Activated CD4-positive, alpha-beta memory T cell treated with anti-CD3 and anti-CD28 coated beads for 36 hours (primary cell): ENCODE measurements at regions of chr12 and their contacts with region 1.

Region 1: GRCh38 chr12:46209914-46210872 is 58.6 kb downstream of the SLC38A1 start:
- DNase-seq: peak; percentile 82
- H3K4me3 Mint-ChIP-seq: peak overlapping the region; percentile 40
- H3K27ac Mint-ChIP-seq: peak overlapping the region; percentile 98
- H3K4me1 Mint-ChIP-seq: peaks cover 74% of the 10 kb centered on the region
- H3K27me3 Mint-ChIP-seq: no peaks in the 10 kb centered on the region

Region 2: DNA sequence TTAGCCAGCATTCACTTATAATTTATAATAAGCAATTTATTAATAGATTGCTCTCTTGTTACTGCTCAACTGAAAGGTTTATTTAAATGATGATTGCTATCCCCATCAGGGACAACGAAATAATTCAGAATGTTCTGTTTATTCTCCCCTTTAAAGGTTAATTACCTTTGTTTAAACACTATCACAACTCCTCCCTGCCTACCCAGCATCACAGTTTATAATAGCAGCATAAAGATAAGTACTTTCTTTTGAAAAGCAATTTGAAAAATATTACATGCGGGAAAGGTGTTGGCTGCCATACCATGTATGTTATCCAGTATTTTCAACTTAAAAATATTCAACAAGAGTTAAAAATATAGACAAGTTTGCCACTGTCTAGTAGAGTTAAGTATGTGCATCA is 250.5 kb before region 1 on chr12:
- CTCF ChIA-PET with region 1: no interaction called
- POLR2A ChIA-PET with region 1: no interaction called
- intact Hi-C with region 1: no loop called
- DNase-seq: no peak
- H3K4me3 Mint-ChIP-seq: no peak overlapping the region
- H3K27ac Mint-ChIP-seq: no peak overlapping the region
- H3K4me1 Mint-ChIP-seq: peaks cover 13% of the 10 kb centered on the region
- H3K27me3 Mint-ChIP-seq: no peaks in the 10 kb centered on the region

Region 3: DNA sequence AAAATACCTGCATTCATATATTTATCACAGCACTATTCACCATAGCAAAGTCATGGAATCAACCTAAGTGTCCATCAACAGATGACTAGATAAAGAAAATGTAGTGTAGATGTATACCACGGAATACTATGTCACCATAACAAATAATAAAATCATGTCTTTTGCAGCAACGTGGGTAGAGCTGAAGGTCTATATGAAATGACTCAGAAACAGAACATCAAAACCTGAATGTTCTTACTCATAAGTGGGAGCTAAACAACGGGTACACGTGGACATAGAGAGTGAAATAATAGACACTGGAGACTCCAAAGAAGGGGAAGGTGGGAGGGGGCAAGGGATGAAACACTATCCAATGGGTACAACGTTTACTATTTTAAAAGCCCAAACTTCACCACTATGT is 20.8 kb after region 1 on chr12:
- CTCF ChIA-PET with region 1: interaction called, 3 read pairs
- POLR2A ChIA-PET with region 1: interaction called, 8 read pairs
- intact Hi-C with region 1: loop called (anchors 1 kb)
- DNase-seq: no peak
- H3K4me3 Mint-ChIP-seq: no peak overlapping the region
- H3K27ac Mint-ChIP-seq: peak overlapping the region; percentile 69
- H3K4me1 Mint-ChIP-seq: peaks cover 57% of the 10 kb centered on the region
- H3K27me3 Mint-ChIP-seq: no peaks in the 10 kb centered on the region

Region 4: GRCh38 chr12:46282829-46283228 is 72.6 kb after region 1 on chr12:
- CTCF ChIA-PET with region 1: no interaction called
- POLR2A ChIA-PET with region 1: no interaction called
- intact Hi-C with region 1: no loop called
- DNase-seq: no peak
- H3K4me3 Mint-ChIP-seq: no peak overlapping the region
- H3K27ac Mint-ChIP-seq: no peak overlapping the region
- H3K4me1 Mint-ChIP-seq: no peaks in the 10 kb centered on the region
- H3K27me3 Mint-ChIP-seq: no peaks in the 10 kb centered on the region

Region 5: GRCh38 chr12:46523863-46524770 is 313.9 kb after region 1 on chr12:
- CTCF ChIA-PET with region 1: no interaction called
- POLR2A ChIA-PET with region 1: no interaction called
- intact Hi-C with region 1: loop called (anchors 10 kb)
- DNase-seq: peak; percentile 74
- H3K4me3 Mint-ChIP-seq: peak overlapping the region; percentile 65
- H3K27ac Mint-ChIP-seq: peak overlapping the region; percentile 90
- H3K4me1 Mint-ChIP-seq: peaks cover 30% of the 10 kb centered on the region
- H3K27me3 Mint-ChIP-seq: no peaks in the 10 kb centered on the region

Region 6: GRCh38 chr12:47079468-47079980 is 869.3 kb after region 1 on chr12 and contains the starts of genes AMIGO2 and PCED1B:
- CTCF ChIA-PET with region 1: no interaction called
- POLR2A ChIA-PET with region 1: no interaction called
- intact Hi-C with region 1: loop called (anchors 10 kb)
- DNase-seq: peak; percentile 83
- H3K4me3 Mint-ChIP-seq: peak within 1 kb of the TSS; percentile 99
- H3K27ac Mint-ChIP-seq: peak within 1 kb of the TSS; percentile 92
- H3K4me1 Mint-ChIP-seq: peaks cover 72% of the 10 kb centered on the region
- H3K27me3 Mint-ChIP-seq: no peaks in the 10 kb centered on the region
- total RNA-seq, gene AMIGO2: 12.4 to 13.6 TPM
- total RNA-seq, gene PCED1B: 133 to 136 TPM